G401 (cell line): ENCODE measurements at regions of chr12 and their contacts with region 1.

Region 1: GRCh38 chr12:117011988-117012805 is 87.0 kb downstream of the TESC start:
- DNase-seq: no peak

Region 2: GRCh38 chr12:116703214-116703795 is 308.9 kb before region 1 on chr12:
- in situ Hi-C with region 1: loop called (anchors 25 kb)
- DNase-seq: peak; percentile 79